Thyroid gland (tissue), 4 donors: ENCODE measurements at regions of chr1 and their contacts with region 1.

Region 1: GRCh38 chr1:152869808-152870419 is 8.2 kb upstream of the SMCP start:
- DNase-seq: peak; percentile 70 to 75
- H3K4me3 ChIP-seq: no peak overlapping the region
- H3K27ac ChIP-seq: no peak overlapping the region
- H3K4me1 ChIP-seq: no peaks in the 10 kb centered on the region
- H3K27me3 ChIP-seq: no peaks in the 10 kb centered on the region
- CTCF ChIP-seq: peak; percentile 36 to 85 (median 58)
- POLR2A ChIP-seq: no peak

Region 2: GRCh38 chr1:153220606-153221303 is 350.8 kb after region 1 on chr1:
- intact Hi-C with region 1: loop called (anchors 5 kb)
- DNase-seq: no peak
- H3K4me3 ChIP-seq: no peak overlapping the region
- H3K27ac ChIP-seq: no peak overlapping the region
- H3K4me1 ChIP-seq: peaks cover 17 to 19% of the 10 kb centered on the region in 2 donors
- H3K27me3 ChIP-seq: no peaks in the 10 kb centered on the region
- CTCF ChIP-seq: no peak
- POLR2A ChIP-seq: no peak